Panc1 (cell line): ENCODE measurements at regions of chr1 and their contacts with region 1.

Region 1: GRCh38 chr1:85692730-85693314 is 15.4 kb downstream of the ZNHIT6 start:
- DNase-seq: peak; percentile 56
- ATAC-seq: peak; percentile 66
- H3K4me3 ChIP-seq: no peak overlapping the region
- H3K27ac ChIP-seq: peak overlapping the region; percentile 76
- H3K4me1 ChIP-seq: peaks cover 11% of the 10 kb centered on the region
- H3K27me3 ChIP-seq: no peaks in the 10 kb centered on the region
- CTCF ChIP-seq: peak; percentile 68; the same call in 1 of the 2 replicates

Region 2: DNA sequence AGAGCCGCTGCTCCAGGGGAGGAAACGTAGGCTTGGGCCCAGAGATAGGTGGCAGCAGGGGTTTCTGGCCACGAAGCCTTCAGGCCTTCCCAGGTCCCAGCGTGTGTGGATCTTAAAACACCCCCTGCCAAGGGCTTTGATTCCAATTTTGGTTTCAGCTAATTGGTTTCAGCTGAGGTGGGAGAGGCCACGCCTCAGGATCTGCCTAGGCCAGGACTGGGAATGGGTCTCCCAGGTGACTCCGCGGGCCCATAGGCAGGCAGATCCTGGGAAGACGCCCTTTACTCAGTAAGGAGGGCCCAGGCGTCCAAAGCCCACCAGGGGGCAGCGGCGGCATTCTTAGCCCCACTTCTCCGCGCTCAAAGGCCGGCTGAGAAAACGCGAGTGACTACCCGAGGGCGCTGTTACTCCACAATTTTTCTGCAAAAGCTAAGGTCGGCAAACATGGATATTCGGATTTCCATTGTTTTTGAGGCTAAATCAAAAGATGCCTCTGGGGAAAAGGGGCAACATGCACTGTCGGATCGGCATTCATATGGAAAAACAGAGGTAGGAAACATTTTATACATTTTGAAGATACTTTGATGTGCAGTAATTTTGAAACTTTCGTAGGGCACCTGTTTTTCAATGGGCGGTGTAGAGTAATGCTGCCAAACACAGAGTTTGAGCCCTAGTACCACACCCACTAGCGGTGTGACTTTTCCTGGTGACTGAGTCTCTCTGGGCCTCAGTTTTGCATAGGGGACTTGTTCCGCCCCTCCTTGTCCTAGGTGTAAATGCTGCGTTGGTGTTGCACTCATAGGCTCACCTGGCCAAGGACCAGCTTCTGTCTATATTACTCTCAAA is 384.6 kb before region 1 on chr1:
- CTCF ChIA-PET with region 1: interaction called, 6 read pairs
- POLR2A ChIA-PET with region 1: interaction called, 3 read pairs
- in situ Hi-C with region 1: loop called (anchors 25 kb)
- intact Hi-C with region 1: loop called (anchors 2 kb)
- DNase-seq: peak; percentile 91
- ATAC-seq: peak; percentile 98
- H3K4me3 ChIP-seq: no peak overlapping the region
- H3K27ac ChIP-seq: peak overlapping the region; percentile 79
- H3K4me1 ChIP-seq: peaks cover 14% of the 10 kb centered on the region
- H3K27me3 ChIP-seq: no peaks in the 10 kb centered on the region
- CTCF ChIP-seq: peak; percentile 100

Region 3: GRCh38 chr1:85550784-85551516 is 141.9 kb before region 1 on chr1:
- CTCF ChIA-PET with region 1: no interaction called
- POLR2A ChIA-PET with region 1: no interaction called
- in situ Hi-C with region 1: no loop called
- intact Hi-C with region 1: no loop called
- DNase-seq: peak; percentile 88
- ATAC-seq: peak; percentile 82
- H3K4me3 ChIP-seq: peak overlapping the region in 1 of 2 experiments; percentile 26; a peak in 2 of 4 replicates
- H3K27ac ChIP-seq: peak overlapping the region; percentile 91
- H3K4me1 ChIP-seq: peaks cover 95% of the 10 kb centered on the region
- H3K27me3 ChIP-seq: no peaks in the 10 kb centered on the region
- CTCF ChIP-seq: no peak

Region 4: GRCh38 chr1:85584264-85584781 is 108.5 kb before region 1 on chr1:
- CTCF ChIA-PET with region 1: interaction called, 20 read pairs
- POLR2A ChIA-PET with region 1: interaction called, 8 read pairs
- in situ Hi-C with region 1: no loop called
- intact Hi-C with region 1: loop called (anchors 2 kb)
- DNase-seq: peak; percentile 99
- ATAC-seq: peak; percentile 33
- H3K4me3 ChIP-seq: peak overlapping the region; percentile 76 to 88
- H3K27ac ChIP-seq: peak overlapping the region; percentile 100
- H3K4me1 ChIP-seq: peaks cover 40% of the 10 kb centered on the region
- H3K27me3 ChIP-seq: no peaks in the 10 kb centered on the region
- CTCF ChIP-seq: no peak

Region 5: GRCh38 chr1:85607126-85607912 is 85.5 kb before region 1 on chr1:
- CTCF ChIA-PET with region 1: interaction called, 24 read pairs
- POLR2A ChIA-PET with region 1: no interaction called
- in situ Hi-C with region 1: no loop called
- intact Hi-C with region 1: loop called (anchors 2 kb)
- DNase-seq: peak; percentile 100
- ATAC-seq: peak; percentile 92
- H3K4me3 ChIP-seq: no peak overlapping the region
- H3K27ac ChIP-seq: peak overlapping the region; percentile 98
- H3K4me1 ChIP-seq: peaks cover 47% of the 10 kb centered on the region
- H3K27me3 ChIP-seq: no peaks in the 10 kb centered on the region
- CTCF ChIP-seq: no peak

Region 6: GRCh38 chr1:85612704-85613361 is 80.0 kb before region 1 on chr1:
- CTCF ChIA-PET with region 1: interaction called, 24 read pairs
- POLR2A ChIA-PET with region 1: no interaction called
- in situ Hi-C with region 1: no loop called
- intact Hi-C with region 1: no loop called
- DNase-seq: peak; percentile 71
- ATAC-seq: peak; percentile 78
- H3K4me3 ChIP-seq: no peak overlapping the region
- H3K27ac ChIP-seq: peak overlapping the region; percentile 98
- H3K4me1 ChIP-seq: peaks cover 36% of the 10 kb centered on the region
- H3K27me3 ChIP-seq: no peaks in the 10 kb centered on the region
- CTCF ChIP-seq: peak; percentile 95

Region 7: DNA sequence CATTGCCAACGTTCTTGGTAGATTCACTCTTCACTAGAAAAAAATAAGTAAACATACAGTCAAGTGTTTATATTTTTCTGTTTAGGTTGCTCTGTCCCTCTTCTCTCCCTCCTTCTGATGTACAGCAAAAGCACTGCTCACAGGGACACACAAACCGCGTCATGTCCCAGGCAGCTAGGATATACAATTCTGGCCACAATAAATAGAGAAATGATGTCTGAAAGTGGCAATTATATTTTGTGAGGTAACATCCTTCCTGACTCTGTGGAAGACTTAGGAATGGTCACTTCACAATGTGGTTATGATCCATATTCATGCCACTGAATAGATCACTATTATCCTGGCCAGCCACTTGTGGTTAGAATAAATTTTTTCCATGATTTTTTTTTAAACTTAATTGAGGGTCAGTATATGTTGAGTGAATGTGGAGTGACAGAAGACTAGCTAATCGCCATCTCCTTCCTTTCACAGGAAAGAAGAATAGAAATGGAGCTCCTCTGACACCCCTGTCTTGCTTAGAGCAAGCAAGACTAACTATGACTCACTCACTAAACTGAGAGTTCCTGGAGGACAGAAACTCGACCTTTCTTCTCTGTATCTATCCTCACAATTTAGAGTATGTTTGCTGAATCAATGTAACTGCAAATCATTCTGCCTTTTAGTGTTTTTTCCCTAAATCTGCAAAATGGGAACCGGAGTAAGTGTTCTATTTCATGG is 38.6 kb before region 1 on chr1:
- CTCF ChIA-PET with region 1: no interaction called
- POLR2A ChIA-PET with region 1: no interaction called
- in situ Hi-C with region 1: no loop called
- intact Hi-C with region 1: loop called (anchors 2 kb)
- DNase-seq: no peak
- ATAC-seq: peak; percentile 71
- H3K4me3 ChIP-seq: no peak overlapping the region
- H3K27ac ChIP-seq: peak overlapping the region; percentile 74
- H3K4me1 ChIP-seq: peaks cover 33% of the 10 kb centered on the region
- H3K27me3 ChIP-seq: no peaks in the 10 kb centered on the region
- CTCF ChIP-seq: no peak

Region 8: GRCh38 chr1:85707990-85708828 is 15.4 kb after region 1 on chr1 and contains the start of gene ZNHIT6:
- CTCF ChIA-PET with region 1: interaction called, 12 read pairs
- POLR2A ChIA-PET with region 1: interaction called, 6 read pairs
- in situ Hi-C with region 1: no loop called
- intact Hi-C with region 1: no loop called
- DNase-seq: peak; percentile 98
- ATAC-seq: peak; percentile 97
- H3K4me3 ChIP-seq: peak within 1 kb of the TSS; percentile 57 to 76
- H3K27ac ChIP-seq: peak within 1 kb of the TSS; percentile 96
- H3K4me1 ChIP-seq: peaks cover 18% of the 10 kb centered on the region
- H3K27me3 ChIP-seq: no peaks in the 10 kb centered on the region
- CTCF ChIP-seq: peak; percentile 57
- total RNA-seq, gene ZNHIT6: 56.2 TPM

Region 9: DNA sequence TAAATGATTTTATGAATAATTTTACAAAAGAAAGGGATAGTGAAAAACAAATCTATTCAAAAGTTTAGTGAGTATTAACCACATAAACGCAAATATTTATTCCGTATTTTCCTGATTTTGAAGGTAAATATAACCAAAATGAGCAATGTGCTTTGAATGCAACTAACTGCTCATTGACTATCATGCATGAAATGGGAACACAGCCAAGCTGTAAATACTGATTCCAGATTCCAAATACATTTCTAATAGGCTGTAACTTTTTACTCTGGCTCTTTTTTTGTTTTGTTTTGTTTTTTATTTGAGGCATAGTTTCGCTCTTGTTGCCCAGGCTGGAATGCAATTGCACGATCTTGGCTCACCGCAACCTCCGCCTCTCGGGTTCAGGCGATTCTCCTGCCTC is 1179.3 kb after region 1 on chr1:
- CTCF ChIA-PET with region 1: no interaction called
- POLR2A ChIA-PET with region 1: no interaction called
- in situ Hi-C with region 1: no loop called
- intact Hi-C with region 1: no loop called
- DNase-seq: no peak
- ATAC-seq: no peak
- H3K4me3 ChIP-seq: no peak overlapping the region
- H3K27ac ChIP-seq: no peak overlapping the region
- H3K4me1 ChIP-seq: no peaks in the 10 kb centered on the region
- H3K27me3 ChIP-seq: no peaks in the 10 kb centered on the region
- CTCF ChIP-seq: no peak